HEK293 (cell line): ENCODE measurements at regions of chr1 and their contacts with region 1.

Region 1: DNA sequence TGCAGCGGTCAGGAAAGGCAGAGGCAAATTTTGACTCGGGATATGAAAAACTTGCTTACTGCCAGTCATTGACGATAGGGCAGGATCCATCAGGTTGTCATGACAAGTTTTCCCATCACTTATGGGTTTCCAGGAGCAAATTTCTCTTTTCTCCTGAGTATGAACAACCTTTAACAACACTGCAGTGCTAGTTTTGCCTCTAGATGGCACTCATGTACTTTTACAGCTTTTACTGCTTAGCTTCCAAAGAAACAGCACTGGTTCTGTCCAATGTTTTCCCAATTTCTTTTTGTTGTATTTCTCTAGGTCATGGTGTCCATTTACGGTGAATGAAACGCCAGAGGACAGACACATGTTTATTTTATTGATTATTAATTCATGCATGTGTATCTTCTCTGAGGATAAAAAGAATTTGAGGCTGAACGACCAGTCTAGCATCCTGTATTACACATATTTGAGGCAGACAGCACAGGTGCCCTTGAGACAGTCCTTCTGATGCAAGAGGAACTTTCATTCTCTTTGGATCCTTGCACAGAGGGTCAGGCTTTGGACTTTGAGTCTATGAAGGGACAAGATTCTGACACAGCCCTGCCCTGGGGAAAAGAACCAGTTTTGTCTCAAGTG is 112.3 kb upstream of the TRABD2B start:
- H3K4me3 ChIP-seq: no peak overlapping the region
- H3K27ac ChIP-seq: no peak overlapping the region
- H3K4me1 ChIP-seq: no peaks in the 10 kb centered on the region
- CTCF ChIP-seq: peak; percentile 70

Region 2: DNA sequence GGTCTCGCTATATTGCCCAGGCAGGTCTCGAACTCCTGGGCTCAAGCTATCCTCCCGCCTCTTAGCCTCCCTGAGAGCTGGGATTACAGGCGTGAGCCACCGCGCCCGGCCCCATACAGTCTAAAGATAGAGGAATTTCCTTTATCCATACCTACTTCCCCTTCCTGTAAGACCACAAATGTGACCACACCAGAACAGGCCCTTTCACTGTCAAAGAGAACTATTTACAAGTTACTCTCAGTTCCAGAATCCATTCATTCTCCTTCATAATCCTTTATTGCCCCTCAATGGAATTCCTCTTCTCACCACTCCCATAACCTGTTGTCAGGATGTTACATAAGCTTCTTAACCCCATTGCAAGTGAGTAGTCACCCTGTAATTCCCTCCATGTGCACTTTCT is 86.7 kb after region 1 on chr1:
- CTCF ChIA-PET with region 1: interaction called, 79 read pairs
- POLR2A ChIA-PET with region 1: no interaction called
- H3K4me3 ChIP-seq: no peak overlapping the region
- H3K27ac ChIP-seq: no peak overlapping the region
- H3K4me1 ChIP-seq: no peaks in the 10 kb centered on the region
- CTCF ChIP-seq: no peak

Region 3: DNA sequence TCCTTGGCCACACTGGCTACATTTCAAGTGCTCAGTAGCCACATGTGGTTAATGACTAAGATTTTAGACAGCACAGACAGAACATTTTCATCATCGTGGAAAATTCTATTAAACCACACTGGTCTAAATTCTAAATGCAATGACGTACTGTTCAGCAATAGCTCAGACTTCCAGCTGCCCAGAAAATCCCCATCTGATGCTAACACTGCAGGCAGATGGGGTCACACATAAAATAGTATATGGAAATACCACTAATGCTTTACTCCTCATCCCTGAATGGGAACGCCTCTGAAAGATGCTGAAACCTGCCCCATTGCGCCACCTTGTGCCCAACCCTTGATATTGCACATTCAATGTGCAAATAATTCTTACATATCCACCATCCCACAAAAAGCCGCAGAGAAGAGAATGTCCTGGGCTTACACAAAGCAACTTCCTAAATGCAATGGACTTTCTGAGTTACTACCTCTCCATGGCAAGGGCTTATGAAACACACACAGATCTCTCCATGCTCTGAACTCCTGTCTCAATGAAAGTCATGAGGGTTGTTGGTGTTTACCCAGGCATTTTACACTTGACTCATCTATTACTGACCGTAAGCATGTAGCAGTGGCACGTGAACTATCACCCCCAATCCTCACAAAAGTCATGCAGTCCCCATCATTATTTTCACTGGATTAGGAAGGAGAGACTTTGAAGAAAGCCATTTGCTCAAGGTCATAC is 92.7 kb after region 1 on chr1:
- CTCF ChIA-PET with region 1: interaction called, 79 read pairs
- POLR2A ChIA-PET with region 1: no interaction called
- H3K4me3 ChIP-seq: no peak overlapping the region
- H3K27ac ChIP-seq: no peak overlapping the region
- H3K4me1 ChIP-seq: no peaks in the 10 kb centered on the region
- CTCF ChIP-seq: peak; percentile 63

Region 4: DNA sequence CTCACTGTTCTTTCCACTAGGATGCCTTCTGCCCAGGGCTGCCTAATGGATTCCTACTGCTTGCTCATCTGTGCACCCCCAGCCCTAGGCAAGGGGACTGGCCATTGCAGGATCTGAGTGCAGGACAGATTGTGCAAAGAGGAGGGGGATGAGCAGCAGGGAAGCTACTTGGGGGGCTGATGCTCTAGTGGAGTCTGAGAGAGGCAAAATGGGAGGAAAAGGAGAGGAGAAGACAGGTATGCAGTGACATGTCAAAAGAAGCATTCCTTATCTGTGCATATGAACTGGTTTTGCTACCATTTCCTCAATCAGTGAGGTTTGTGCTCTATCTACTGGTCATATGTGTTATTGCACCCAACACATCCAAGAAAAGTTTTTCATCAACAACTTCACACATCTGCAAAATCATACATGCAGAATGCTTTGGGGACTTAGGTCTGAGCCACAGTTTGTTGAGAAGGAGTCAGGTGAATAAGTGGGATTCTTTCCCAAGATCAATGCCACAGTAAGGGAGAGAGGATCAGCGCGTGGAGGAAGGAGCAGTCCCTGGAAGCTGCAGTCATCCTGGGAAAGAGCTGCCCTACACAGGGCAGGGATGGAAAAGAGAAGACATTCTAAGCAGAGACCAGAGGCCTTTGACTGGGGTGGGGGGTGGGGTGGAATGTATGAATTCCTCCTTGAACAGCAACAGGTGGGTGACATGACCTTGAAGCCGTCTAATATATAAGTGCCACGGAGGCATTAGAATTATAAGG is 127.4 kb after region 1 on chr1:
- CTCF ChIA-PET with region 1: interaction called, 23 read pairs
- POLR2A ChIA-PET with region 1: no interaction called
- H3K4me3 ChIP-seq: no peak overlapping the region
- H3K27ac ChIP-seq: no peak overlapping the region
- H3K4me1 ChIP-seq: no peaks in the 10 kb centered on the region
- CTCF ChIP-seq: peak; percentile 74